Natural killer cell (primary cell): ENCODE measurements at regions of chr14 and their contacts with region 1.

Region 1: DNA sequence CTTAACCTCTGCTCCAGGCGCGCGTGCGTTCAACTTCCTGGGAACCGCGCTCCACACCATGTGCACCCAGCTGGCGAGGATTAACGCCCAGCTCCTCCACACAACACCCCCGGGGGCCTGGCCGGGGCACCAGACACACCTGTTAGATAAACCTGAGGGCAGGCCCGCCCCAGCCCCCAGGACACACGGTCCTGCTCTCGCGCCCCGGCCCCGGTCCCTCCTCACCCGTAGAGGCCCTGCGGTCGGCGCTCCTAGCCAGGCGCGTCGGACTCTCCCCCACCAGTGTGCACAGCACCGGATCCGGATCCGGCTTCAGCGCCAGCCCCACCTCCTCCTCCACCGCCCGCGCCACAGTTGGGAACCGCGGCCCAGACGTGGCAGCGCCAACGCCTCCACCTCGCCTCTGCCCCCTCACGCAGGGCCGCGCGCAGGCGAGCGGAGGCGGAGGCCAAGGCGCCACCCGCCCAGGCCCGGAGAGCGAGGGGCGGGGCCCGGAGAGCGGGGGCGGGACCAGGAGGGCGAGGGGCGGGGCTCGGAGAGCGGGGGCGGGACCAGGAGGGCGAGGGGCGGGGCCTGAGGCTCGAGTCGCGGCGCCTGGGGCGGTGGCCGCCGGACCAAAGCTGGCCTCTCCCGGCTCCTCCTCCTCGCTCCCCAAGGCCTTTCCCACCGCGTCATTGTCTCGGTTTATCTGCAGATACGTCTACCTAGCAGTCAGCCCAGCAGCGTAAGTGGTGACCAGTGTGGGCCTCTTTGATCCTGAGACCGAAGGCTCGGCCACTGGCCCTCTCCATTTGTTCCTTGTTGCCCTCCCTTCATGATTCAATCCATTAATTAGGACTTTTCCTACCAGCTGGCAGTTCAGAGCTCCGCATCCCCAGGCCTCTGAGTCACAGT is at the start of gene GNPNAT1:
- DNase-seq: peak; percentile 89 to 96
- ATAC-seq: peak; percentile 95 to 99 (median 96)
- H3K4me3 ChIP-seq: peak within 1 kb of the TSS; percentile 73
- H3K4me3 Mint-ChIP-seq: peak within 1 kb of the TSS; percentile 94
- H3K27ac ChIP-seq: peak within 1 kb of the TSS; percentile 65
- H3K27ac Mint-ChIP-seq: peak within 1 kb of the TSS; percentile 88
- H3K4me1 ChIP-seq: peaks cover 19% of the 10 kb centered on the region
- H3K4me1 Mint-ChIP-seq: peaks cover 28 to 34% of the 10 kb centered on the region in 2 donors
- H3K27me3 ChIP-seq: no peaks in the 10 kb centered on the region
- H3K27me3 Mint-ChIP-seq: no peaks in the 10 kb centered on the region
- CTCF ChIP-seq: no peak
- total RNA-seq, gene GNPNAT1: 5.6 to 7.5 (median 7.0) TPM

Region 2: DNA sequence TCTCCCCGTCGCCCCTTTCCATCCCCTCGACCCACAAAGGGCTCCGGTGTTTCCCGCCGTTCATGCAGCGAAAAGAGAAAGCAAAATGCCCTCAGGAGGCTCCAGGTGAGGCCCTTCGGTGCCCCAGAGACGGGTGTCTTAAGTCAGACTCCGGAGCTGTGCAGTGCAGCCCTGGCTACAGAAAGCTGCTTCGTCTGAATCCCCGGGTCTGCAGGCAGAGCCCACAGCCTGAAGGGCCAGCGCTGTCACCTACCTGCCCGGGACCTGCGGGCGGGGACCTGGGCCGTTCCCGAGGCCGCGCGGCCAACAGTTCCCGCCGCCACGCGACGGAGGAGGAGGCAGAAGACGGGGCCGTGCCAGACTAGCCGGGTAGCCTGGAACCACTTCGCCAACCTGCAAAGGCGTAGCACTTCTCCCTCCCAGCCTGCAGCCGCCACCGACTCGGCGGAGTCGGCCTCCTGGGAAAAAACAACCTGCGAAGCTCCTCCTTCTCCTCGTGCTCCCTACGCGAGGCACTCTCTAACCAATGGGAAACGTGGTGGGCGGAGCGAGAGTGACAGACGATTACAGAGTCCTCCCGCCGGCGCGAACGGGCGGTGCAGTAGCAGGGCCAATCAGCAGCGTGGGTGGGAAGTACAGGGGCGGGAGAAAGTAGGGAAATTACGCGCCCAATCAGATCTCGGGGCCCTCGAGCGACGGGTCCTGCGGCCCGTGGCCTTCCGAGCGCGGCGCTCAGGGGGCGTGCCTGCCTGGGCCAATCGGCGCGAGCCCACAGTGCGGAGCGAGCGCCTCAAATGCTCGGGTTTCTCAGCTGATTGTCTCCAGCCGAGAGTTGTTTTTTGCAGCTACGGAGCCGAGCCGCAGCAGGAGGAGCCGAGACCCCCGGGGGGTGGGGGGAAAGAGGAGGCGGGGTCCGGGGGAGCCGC is 239.1 kb before region 1 on chr14 and contains the starts of genes GPR137C and TXNDC16:
- intact Hi-C with region 1: loop called (anchors 2 kb)
- DNase-seq: peak; percentile 97 to 100
- ATAC-seq: peak; percentile 85 to 96 (median 88)
- H3K4me3 ChIP-seq: peak within 1 kb of the TSS; percentile 84
- H3K4me3 Mint-ChIP-seq: peak within 1 kb of the TSS; percentile 99
- H3K27ac ChIP-seq: peak within 1 kb of the TSS; percentile 84
- H3K27ac Mint-ChIP-seq: peak within 1 kb of the TSS; percentile 93 to 98
- H3K4me1 ChIP-seq: peaks cover 14% of the 10 kb centered on the region
- H3K4me1 Mint-ChIP-seq: peaks cover 33 to 41% of the 10 kb centered on the region in 2 donors
- H3K27me3 ChIP-seq: peaks cover 2% of the 10 kb centered on the region
- H3K27me3 Mint-ChIP-seq: peaks cover 0 to 16% of the 10 kb centered on the region in 2 donors
- CTCF ChIP-seq: no peak
- total RNA-seq, gene GPR137C: 0.42 to 1.4 (median 0.57) TPM
- total RNA-seq, gene TXNDC16: 16.5 to 22.0 (median 20.7) TPM

Region 3: DNA sequence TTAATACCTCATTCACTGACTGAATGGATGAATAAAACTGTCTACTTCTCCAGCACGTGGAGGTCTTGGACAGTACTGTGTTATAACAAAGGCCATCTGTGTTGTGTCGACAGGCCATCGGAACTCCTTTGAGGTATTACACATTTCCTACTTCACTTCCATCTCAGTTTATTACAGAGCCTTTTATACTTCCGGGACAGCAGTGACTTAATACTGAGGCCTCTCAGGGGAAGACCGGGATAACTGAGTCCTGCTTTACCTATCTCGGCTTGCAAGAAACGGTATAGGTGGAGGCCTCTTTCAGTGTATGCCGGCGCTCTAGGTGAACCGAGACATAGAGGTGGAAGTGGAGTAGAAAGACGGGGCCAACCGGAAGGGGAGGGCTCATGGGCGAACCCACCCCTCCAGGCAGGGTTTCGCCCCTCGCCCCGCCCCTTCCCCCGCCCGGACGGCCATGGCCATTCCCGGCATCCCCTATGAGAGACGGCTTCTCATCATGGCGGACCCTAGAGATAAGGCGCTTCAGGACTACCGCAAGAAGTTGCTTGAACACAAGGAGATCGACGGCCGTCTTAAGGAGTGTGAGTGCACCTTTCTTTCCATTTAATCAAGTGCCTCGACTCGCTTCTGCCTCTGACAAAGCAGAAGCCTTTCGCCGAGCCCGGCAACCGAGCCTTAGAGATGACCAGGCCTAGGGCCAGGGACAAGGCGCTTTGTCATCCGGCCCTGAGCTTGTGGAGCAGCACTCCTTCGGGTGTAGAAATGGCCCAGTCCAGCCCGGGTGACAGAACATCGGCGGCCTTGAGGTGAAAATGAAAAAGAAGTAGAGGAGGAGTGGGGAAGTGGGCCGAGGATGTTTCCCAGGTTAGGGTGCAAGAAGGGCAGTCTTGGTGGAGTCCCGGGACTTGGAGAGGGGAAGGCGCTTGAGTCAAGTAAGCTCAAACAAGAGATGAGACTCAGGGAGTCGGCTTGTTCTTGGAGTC is 84.4 kb before region 1 on chr14 and contains the start of gene PSMC6:
- intact Hi-C with region 1: loop called (anchors 5 kb)
- DNase-seq: peak; percentile 85 to 96
- ATAC-seq: peak; percentile 98 to 100 (median 99)
- H3K4me3 ChIP-seq: peak within 1 kb of the TSS; percentile 75
- H3K4me3 Mint-ChIP-seq: peak within 1 kb of the TSS; percentile 97
- H3K27ac ChIP-seq: peak within 1 kb of the TSS; percentile 94
- H3K27ac Mint-ChIP-seq: peak within 1 kb of the TSS; percentile 97
- H3K4me1 ChIP-seq: peaks cover 10% of the 10 kb centered on the region
- H3K4me1 Mint-ChIP-seq: peaks cover 23 to 30% of the 10 kb centered on the region in 2 donors
- H3K27me3 ChIP-seq: no peaks in the 10 kb centered on the region
- H3K27me3 Mint-ChIP-seq: peaks cover 0 to 4% of the 10 kb centered on the region in 2 donors
- CTCF ChIP-seq: no peak
- total RNA-seq, gene PSMC6: 148 to 160 (median 159) TPM

Region 4: GRCh38 chr14:52729925-52730667 is 61.4 kb before region 1 on chr14 and contains the start of gene STYX:
- intact Hi-C with region 1: loop called (anchors 10 kb)
- DNase-seq: peak; percentile 96 to 99
- ATAC-seq: peak; percentile 96 to 100 (median 96)
- H3K4me3 ChIP-seq: peak within 1 kb of the TSS; percentile 98
- H3K4me3 Mint-ChIP-seq: peak within 1 kb of the TSS; percentile 93
- H3K27ac ChIP-seq: peak within 1 kb of the TSS; percentile 67
- H3K27ac Mint-ChIP-seq: peak within 1 kb of the TSS; percentile 83 to 93
- H3K4me1 ChIP-seq: peaks cover 12% of the 10 kb centered on the region
- H3K4me1 Mint-ChIP-seq: peaks cover 27 to 28% of the 10 kb centered on the region in 2 donors
- H3K27me3 ChIP-seq: no peaks in the 10 kb centered on the region
- H3K27me3 Mint-ChIP-seq: no peaks in the 10 kb centered on the region
- CTCF ChIP-seq: no peak
- total RNA-seq, gene STYX: 13.3 to 22.9 (median 18.3) TPM

Region 5: DNA sequence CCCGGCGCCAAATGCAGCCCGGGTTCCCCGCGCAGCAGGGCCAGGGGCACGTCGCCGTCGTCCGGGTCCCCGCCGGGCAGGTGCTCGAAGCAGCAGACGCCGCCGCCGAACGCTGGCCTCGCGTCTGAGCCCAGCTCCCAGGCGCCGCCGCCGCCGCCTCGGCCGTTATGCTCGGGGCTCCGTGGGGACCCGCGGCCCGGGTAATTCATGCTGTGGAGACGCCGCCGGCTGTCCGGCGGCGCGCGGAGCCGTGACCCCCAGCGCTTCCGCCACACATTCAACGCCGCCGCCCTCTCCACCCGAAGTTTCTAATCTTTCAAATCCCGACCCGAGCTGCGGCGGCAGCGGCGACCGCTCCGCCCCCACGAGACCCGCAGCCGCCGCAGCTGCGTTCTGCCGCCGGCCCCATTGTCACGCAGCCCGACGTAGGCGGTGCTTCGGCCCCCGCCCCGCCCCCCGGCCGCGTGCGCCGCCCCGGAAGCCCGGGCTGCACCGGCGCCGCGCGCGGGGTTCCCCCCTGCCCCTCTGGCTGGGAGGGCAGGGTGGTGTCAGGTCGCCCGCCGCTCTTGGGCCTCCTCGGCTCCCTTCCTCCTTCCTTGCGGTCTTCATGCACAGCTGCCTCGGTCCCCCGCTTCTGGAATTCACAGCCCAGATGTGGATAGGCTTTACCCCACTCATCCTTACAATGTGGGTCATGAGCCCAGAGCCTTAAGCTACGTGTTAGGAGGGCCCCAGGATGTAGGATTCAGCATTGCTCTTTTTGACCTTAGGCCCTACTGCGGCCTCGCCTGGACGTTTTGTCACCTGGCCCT is 361.6 kb after region 1 on chr14 and contains the start of gene DDHD1:
- intact Hi-C with region 1: loop called (anchors 5 kb)
- DNase-seq: peak; percentile 88 to 93
- ATAC-seq: peak; percentile 82 to 94 (median 86)
- H3K4me3 ChIP-seq: peak within 1 kb of the TSS; percentile 90
- H3K4me3 Mint-ChIP-seq: peak within 1 kb of the TSS; percentile 100
- H3K27ac ChIP-seq: peak within 1 kb of the TSS; percentile 90
- H3K27ac Mint-ChIP-seq: peak within 1 kb of the TSS; percentile 98 to 100
- H3K4me1 ChIP-seq: peaks cover 29% of the 10 kb centered on the region
- H3K4me1 Mint-ChIP-seq: peaks cover 52 to 59% of the 10 kb centered on the region in 2 donors
- H3K27me3 ChIP-seq: no peaks in the 10 kb centered on the region
- H3K27me3 Mint-ChIP-seq: no peaks in the 10 kb centered on the region
- CTCF ChIP-seq: no peak
- total RNA-seq, gene DDHD1: 76.6 to 82.3 (median 80.9) TPM